ENCODE measurements at regions of chr13 and their contacts with region 1.

Region 1: GRCh38 chr13:69324090-69324886 is 783.3 kb upstream of the ATXN8OS start:
- DNase-seq: peak; percentile 36
- H3K4me3 Mint-ChIP-seq: no peak overlapping the region
- H3K27ac Mint-ChIP-seq: no peak overlapping the region
- H3K4me1 Mint-ChIP-seq: no peaks in the 10 kb centered on the region
- H3K27me3 Mint-ChIP-seq: no peaks in the 10 kb centered on the region
- CTCF ChIP-seq: peak; percentile 57

Region 2: GRCh38 chr13:68304286-68304893 is 1019.9 kb before region 1 on chr13:
- CTCF ChIA-PET with region 1: interaction called, 3 read pairs
- POLR2A ChIA-PET with region 1: no interaction called
- intact Hi-C with region 1: loop called (anchors 1 kb)
- DNase-seq: peak; percentile 62
- H3K4me3 Mint-ChIP-seq: no peak overlapping the region
- H3K27ac Mint-ChIP-seq: no peak overlapping the region
- H3K4me1 Mint-ChIP-seq: no peaks in the 10 kb centered on the region
- H3K27me3 Mint-ChIP-seq: no peaks in the 10 kb centered on the region
- CTCF ChIP-seq: peak; percentile 60

Region 3: GRCh38 chr13:68810660-68811059 is 513.6 kb before region 1 on chr13:
- CTCF ChIA-PET with region 1: interaction called, 3 read pairs
- POLR2A ChIA-PET with region 1: no interaction called
- intact Hi-C with region 1: loop called (anchors 5 kb)
- DNase-seq: peak; percentile 14
- H3K4me3 Mint-ChIP-seq: no peak overlapping the region
- H3K27ac Mint-ChIP-seq: no peak overlapping the region
- H3K4me1 Mint-ChIP-seq: no peaks in the 10 kb centered on the region
- H3K27me3 Mint-ChIP-seq: no peaks in the 10 kb centered on the region
- CTCF ChIP-seq: peak; percentile 24

Region 4: GRCh38 chr13:69008499-69008898 is 315.8 kb before region 1 on chr13:
- CTCF ChIA-PET with region 1: no interaction called
- POLR2A ChIA-PET with region 1: no interaction called
- intact Hi-C with region 1: no loop called
- DNase-seq: no peak
- H3K4me3 Mint-ChIP-seq: no peak overlapping the region
- H3K27ac Mint-ChIP-seq: no peak overlapping the region
- H3K4me1 Mint-ChIP-seq: no peaks in the 10 kb centered on the region
- H3K27me3 Mint-ChIP-seq: no peaks in the 10 kb centered on the region
- CTCF ChIP-seq: no peak

Region 5: GRCh38 chr13:69524459-69525155 is 200.3 kb after region 1 on chr13:
- CTCF ChIA-PET with region 1: no interaction called
- POLR2A ChIA-PET with region 1: no interaction called
- intact Hi-C with region 1: loop called (anchors 10 kb)
- DNase-seq: peak; percentile 20
- H3K4me3 Mint-ChIP-seq: no peak overlapping the region
- H3K27ac Mint-ChIP-seq: no peak overlapping the region
- H3K4me1 Mint-ChIP-seq: no peaks in the 10 kb centered on the region
- H3K27me3 Mint-ChIP-seq: no peaks in the 10 kb centered on the region
- CTCF ChIP-seq: peak; percentile 48